Caco-2 (cell line): ENCODE measurements at regions of chr10 and their contacts with region 1.

Region 1: DNA sequence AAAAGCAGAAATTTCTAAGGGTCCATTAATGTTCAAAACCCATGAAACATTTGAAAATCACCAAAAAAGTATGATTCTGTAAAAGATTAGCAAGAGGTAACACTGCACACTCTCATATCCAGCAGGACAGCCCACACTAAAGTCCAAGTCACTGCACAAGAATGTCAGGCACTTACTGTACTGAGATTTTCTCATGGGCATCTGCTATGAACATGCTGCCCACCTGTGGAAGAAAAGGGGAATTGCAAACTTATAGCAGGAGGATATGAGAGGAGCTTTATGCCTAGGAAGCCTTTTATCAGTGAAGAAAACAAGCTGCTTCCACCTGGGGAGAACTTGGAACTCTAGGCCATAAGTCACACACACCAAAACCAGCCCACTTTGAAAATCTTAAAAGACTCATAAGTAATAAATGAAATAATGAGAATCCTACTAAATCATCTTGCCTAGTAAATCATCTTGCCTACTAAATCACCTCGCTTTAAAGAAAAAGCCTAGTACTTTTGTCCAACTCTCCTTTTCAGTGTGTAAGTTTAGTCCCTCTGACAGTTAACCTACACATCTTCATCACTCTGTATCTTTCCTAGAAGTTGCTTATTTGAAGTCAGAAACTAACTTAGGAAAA is 46.1 kb downstream of the ARMH3 start:
- DNase-seq: peak; percentile 72 to 75
- H3K4me3 ChIP-seq: no peak overlapping the region
- H3K4me3 Mint-ChIP-seq: no peak overlapping the region
- H3K27ac Mint-ChIP-seq: peak overlapping the region; percentile 21
- H3K4me1 ChIP-seq: peaks cover 8% of the 10 kb centered on the region
- H3K4me1 Mint-ChIP-seq: peaks cover 13% of the 10 kb centered on the region
- H3K27me3 ChIP-seq: no peaks in the 10 kb centered on the region
- H3K27me3 Mint-ChIP-seq: no peaks in the 10 kb centered on the region
- CTCF ChIP-seq: peak; percentile 76 to 95

Region 2: GRCh38 chr10:101818119-101818871 is 191.6 kb before region 1 on chr10 and contains the start of gene OGA:
- CTCF ChIA-PET with region 1: interaction called, 12 read pairs
- POLR2A ChIA-PET with region 1: no interaction called
- intact Hi-C with region 1: no loop called
- DNase-seq: peak; percentile 99 to 100
- H3K4me3 ChIP-seq: peak within 1 kb of the TSS; percentile 86
- H3K4me3 Mint-ChIP-seq: peak within 1 kb of the TSS; percentile 95
- H3K27ac Mint-ChIP-seq: peak within 1 kb of the TSS; percentile 97
- H3K4me1 ChIP-seq: peaks cover 6% of the 10 kb centered on the region
- H3K4me1 Mint-ChIP-seq: peaks cover 13% of the 10 kb centered on the region
- H3K27me3 ChIP-seq: no peaks in the 10 kb centered on the region
- H3K27me3 Mint-ChIP-seq: no peaks in the 10 kb centered on the region
- CTCF ChIP-seq: no peak
- total RNA-seq, gene OGA: 76.9 and 84.3 TPM in 2 replicates

Region 3: GRCh38 chr10:101840741-101841453 is 169.0 kb before region 1 on chr10:
- CTCF ChIA-PET with region 1: interaction called, 41 read pairs
- POLR2A ChIA-PET with region 1: no interaction called
- intact Hi-C with region 1: loop called (anchors 1 kb)
- DNase-seq: peak; percentile 59 to 77
- H3K4me3 ChIP-seq: no peak overlapping the region
- H3K4me3 Mint-ChIP-seq: peak overlapping the region; percentile 71
- H3K27ac Mint-ChIP-seq: no peak overlapping the region
- H3K4me1 ChIP-seq: peaks cover 28% of the 10 kb centered on the region
- H3K4me1 Mint-ChIP-seq: peaks cover 10% of the 10 kb centered on the region
- H3K27me3 ChIP-seq: no peaks in the 10 kb centered on the region
- H3K27me3 Mint-ChIP-seq: no peaks in the 10 kb centered on the region
- CTCF ChIP-seq: peak; percentile 74 to 82

Region 4: GRCh38 chr10:101995451-101996063 is 14.4 kb before region 1 on chr10:
- CTCF ChIA-PET with region 1: interaction called, 11 read pairs
- POLR2A ChIA-PET with region 1: no interaction called
- intact Hi-C with region 1: no loop called
- DNase-seq: no peak
- H3K4me3 ChIP-seq: no peak overlapping the region
- H3K4me3 Mint-ChIP-seq: no peak overlapping the region
- H3K27ac Mint-ChIP-seq: no peak overlapping the region
- H3K4me1 ChIP-seq: 0 out of 2 replicates have a peak, but pooled peaks cover 12% of the 10 kb centered on the region
- H3K4me1 Mint-ChIP-seq: peaks cover 10% of the 10 kb centered on the region
- H3K27me3 ChIP-seq: no peaks in the 10 kb centered on the region
- H3K27me3 Mint-ChIP-seq: no peaks in the 10 kb centered on the region
- CTCF ChIP-seq: no peak